ENCODE measurements at regions of chr11 and their contacts with region 1.

Region 1: DNA sequence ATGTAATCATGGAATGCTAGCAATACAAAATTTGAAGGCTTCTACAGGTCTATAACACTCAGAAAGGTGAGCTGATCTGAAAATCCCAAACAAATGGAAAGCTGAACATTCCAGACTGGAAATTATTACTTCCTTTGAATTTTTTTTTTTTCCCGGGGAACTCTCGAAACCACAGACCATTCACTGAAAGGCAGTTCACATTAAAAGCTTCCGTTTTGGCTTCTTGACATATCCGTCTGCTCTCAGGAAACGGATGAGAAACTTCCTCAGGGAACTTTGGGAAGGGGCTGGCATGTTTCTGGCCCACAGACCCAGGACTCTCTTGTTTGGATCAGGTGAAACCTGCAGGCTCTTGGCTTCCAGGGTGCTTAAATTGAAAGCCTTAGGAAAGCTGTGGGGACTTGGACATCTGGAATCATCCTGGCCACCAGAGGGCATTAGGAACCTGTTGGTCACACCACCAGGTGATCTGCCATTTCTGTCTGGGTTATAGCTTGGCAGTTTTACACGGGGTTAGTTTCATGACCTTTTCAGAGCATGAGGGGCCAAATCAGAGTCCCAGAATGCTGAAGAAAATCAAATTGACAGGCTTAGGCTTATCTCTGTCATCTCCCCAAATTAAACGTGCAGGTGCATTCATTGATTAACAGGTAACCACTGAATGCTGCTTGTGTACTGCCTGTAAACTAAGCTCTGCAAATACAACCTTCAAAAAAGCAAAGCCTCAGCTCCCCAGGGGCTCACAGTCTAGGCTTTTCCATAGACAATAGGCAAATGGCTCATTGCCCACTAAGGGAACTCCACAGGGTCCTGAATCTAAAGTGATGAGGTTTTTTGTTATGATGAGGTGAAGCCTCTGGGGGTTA is 22.7 kb upstream of the GRAMD1B start:
- DNase-seq: peak; percentile 75
- H3K4me3 ChIP-seq: peak overlapping the region in 1 of 3 experiments; percentile 22
- H3K27ac ChIP-seq: no peak overlapping the region
- H3K4me1 ChIP-seq: peaks cover 22% of the 10 kb centered on the region
- H3K27me3 ChIP-seq: peaks cover 3 to 9% of the 10 kb centered on the region in 2 experiments
- CTCF ChIP-seq: peak; percentile 61 to 67
- POLR2A ChIP-seq: no peak

Region 2: GRCh38 chr11:123301696-123302400 is 105.5 kb before region 1 on chr11:
- CTCF ChIA-PET with region 1: interaction called, 11 read pairs
- POLR2A ChIA-PET with region 1: no interaction called
- dilution Hi-C with region 1: no loop called
- intact Hi-C with region 1: loop called (anchors 1 kb)
- DNase-seq: peak; percentile 43
- H3K4me3 ChIP-seq: peak overlapping the region in 2 of 3 experiments; percentile 15 to 29
- H3K27ac ChIP-seq: no peak overlapping the region
- H3K4me1 ChIP-seq: peaks cover 17% of the 10 kb centered on the region
- H3K27me3 ChIP-seq: peaks cover 4 to 6% of the 10 kb centered on the region in 2 experiments
- CTCF ChIP-seq: peak; percentile 81 to 84
- POLR2A ChIP-seq: no peak

Region 3: DNA sequence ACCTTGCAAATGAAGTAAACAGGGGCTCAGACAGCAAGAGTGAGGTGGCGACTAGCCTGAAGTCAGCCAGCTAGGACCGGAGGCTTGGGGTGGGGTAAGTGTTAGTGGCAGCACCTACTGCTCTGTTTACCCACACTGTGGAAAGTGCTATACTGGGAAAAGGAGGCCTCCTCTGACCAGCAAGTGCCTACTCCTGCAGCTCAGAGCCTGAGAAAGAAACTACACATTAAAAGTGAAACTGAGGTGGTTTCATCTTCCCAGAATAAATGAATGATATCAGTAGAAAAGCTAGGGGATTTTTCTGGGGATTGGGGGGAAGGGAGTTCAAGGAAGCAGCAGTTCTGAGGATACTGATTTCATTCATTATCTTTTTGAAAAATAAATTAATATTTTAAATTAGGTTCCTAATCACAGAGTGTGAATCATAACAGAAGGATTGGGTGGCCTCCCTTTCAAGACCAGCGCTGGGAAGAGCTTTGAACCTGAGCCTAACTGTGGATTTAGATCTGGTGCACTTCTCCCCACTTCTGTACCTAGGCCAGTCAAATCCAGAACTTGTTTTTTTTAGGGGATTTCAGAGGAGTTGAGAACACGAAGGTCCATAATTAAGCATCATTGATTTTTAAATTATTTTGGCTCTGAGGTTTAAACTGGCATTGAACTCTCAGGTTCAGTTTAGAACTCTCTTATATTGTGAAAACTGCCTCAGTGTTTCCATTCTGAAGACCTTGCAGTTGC is 25.4 kb before region 1 on chr11:
- CTCF ChIA-PET with region 1: no interaction called
- POLR2A ChIA-PET with region 1: no interaction called
- dilution Hi-C with region 1: no loop called
- intact Hi-C with region 1: no loop called
- DNase-seq: no peak
- H3K4me3 ChIP-seq: no peak overlapping the region
- H3K27ac ChIP-seq: no peak overlapping the region
- H3K4me1 ChIP-seq: no peaks in the 10 kb centered on the region
- H3K27me3 ChIP-seq: peaks cover 5% of the 10 kb centered on the region in 2 experiments
- CTCF ChIP-seq: no peak
- POLR2A ChIP-seq: no peak

Region 4: GRCh38 chr11:123418351-123419114 is 11.2 kb after region 1 on chr11:
- CTCF ChIA-PET with region 1: interaction called, 17 read pairs
- POLR2A ChIA-PET with region 1: no interaction called
- dilution Hi-C with region 1: no loop called
- intact Hi-C with region 1: no loop called
- DNase-seq: no peak
- H3K4me3 ChIP-seq: no peak overlapping the region
- H3K27ac ChIP-seq: no peak overlapping the region
- H3K4me1 ChIP-seq: no peaks in the 10 kb centered on the region
- H3K27me3 ChIP-seq: peaks cover 23 to 28% of the 10 kb centered on the region in 2 experiments
- CTCF ChIP-seq: no peak
- POLR2A ChIP-seq: no peak

Region 5: DNA sequence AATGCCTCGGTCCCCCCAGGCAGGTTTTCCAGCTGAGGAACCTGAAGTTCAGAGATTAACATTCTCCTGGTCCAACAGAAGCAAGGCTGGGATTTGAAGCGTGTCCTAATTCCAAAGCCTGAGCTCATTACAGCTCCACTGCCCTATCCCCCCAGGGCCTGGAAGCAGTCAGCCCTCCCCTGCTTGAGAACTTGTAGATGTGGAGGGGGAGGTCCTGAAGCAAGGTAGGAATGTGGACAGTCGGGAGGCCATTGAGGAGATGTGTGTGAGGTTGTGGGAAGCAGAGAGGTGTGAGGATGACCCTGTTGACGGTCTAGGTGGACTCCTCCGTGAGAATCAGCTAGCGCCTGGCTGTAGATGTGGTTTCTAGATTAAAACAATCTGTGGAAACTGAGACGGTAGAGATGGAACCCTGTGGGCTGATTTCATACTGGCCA is 30.8 kb after region 1 on chr11:
- CTCF ChIA-PET with region 1: interaction called, 36 read pairs
- POLR2A ChIA-PET with region 1: no interaction called
- dilution Hi-C with region 1: no loop called
- intact Hi-C with region 1: no loop called
- DNase-seq: no peak
- H3K4me3 ChIP-seq: no peak overlapping the region
- H3K27ac ChIP-seq: no peak overlapping the region
- H3K4me1 ChIP-seq: no peaks in the 10 kb centered on the region
- H3K27me3 ChIP-seq: no peaks in the 10 kb centered on the region
- CTCF ChIP-seq: no peak
- POLR2A ChIP-seq: no peak

Region 6: DNA sequence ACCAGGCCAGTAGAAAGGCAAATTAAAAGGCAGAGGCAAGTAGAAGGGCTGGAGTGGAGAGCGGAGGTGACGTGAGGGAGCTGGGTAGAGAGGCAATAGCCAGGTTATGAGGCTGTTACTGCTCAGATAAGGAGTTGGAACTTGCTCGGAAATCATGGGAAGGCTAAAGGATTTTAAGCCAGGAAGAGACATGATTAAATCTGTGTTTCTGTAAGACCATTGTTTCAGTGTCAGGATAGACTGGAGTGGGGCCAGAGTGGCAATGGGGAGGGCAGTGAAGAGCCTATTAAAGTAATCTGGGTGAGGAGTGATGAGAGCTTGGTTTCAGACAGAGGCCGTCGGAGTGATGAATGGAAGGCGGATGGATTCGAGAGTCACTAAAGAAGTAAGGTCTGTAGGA is 61.7 kb after region 1 on chr11:
- CTCF ChIA-PET with region 1: interaction called, 368 read pairs
- POLR2A ChIA-PET with region 1: no interaction called
- dilution Hi-C with region 1: no loop called
- intact Hi-C with region 1: loop called (anchors 2 kb)
- DNase-seq: peak; percentile 79
- H3K4me3 ChIP-seq: no peak overlapping the region
- H3K27ac ChIP-seq: peak overlapping the region; percentile 24
- H3K4me1 ChIP-seq: peaks cover 15% of the 10 kb centered on the region
- H3K27me3 ChIP-seq: no peaks in the 10 kb centered on the region
- CTCF ChIP-seq: no peak
- POLR2A ChIP-seq: no peak

Region 7: DNA sequence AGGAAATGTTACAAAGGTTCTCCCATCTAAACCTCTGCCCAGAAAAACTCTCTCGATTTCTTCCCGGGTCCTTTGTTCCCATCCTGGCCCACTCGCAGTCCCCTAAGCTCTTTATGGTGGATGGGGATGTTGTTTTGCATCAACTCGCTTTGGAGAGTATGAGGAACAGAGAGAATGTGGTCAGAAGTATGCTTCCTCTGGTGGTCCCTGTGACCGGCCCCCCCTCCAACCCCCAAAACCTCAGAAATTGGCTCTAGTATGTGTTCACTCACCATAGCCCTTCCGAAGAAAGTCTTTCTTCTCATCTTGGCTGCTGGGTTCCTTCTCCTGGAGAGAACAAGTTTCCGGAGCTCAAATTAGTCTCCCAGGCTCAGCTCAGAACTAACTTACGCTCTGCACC is 77.1 kb after region 1 on chr11:
- CTCF ChIA-PET with region 1: interaction called, 368 read pairs
- POLR2A ChIA-PET with region 1: no interaction called
- dilution Hi-C with region 1: no loop called
- intact Hi-C with region 1: no loop called
- DNase-seq: no peak
- H3K4me3 ChIP-seq: no peak overlapping the region
- H3K27ac ChIP-seq: no peak overlapping the region
- H3K4me1 ChIP-seq: no peaks in the 10 kb centered on the region
- H3K27me3 ChIP-seq: no peaks in the 10 kb centered on the region
- CTCF ChIP-seq: no peak
- POLR2A ChIP-seq: no peak